IMR-90 (cell line): ENCODE measurements at regions of chr11 and their contacts with region 1.

Region 1: DNA sequence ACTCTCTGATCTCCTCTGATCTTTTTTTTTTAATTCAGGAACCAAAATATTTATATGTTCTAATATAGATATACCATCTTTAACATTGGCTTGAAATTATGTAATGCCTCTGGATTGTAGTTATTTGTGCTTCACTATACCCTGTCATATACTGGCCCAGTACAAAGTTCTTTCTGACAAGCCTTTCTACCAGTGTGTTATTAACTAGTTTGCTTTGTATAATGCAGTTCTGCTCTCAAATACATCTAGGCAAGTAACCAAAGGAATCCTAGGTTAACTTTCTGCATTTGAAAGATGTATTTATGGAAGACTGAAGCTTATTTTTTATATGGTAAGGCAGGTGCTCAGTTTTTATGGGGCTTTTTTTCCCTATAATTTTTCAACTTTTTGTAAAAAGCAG is 36.1 kb downstream of the ARHGEF12 start:
- DNase-seq: no peak
- ATAC-seq: peak; percentile 66
- H3K4me3 ChIP-seq: no peak overlapping the region
- H3K27ac ChIP-seq: no peak overlapping the region
- H3K4me1 ChIP-seq: peaks cover 2% of the 10 kb centered on the region; the same call in 1 of the 2 replicates
- H3K27me3 ChIP-seq: no peaks in the 10 kb centered on the region
- CTCF ChIP-seq: no peak
- POLR2A ChIP-seq: no peak
- RAD21 ChIP-seq: no peak

Region 2: DNA sequence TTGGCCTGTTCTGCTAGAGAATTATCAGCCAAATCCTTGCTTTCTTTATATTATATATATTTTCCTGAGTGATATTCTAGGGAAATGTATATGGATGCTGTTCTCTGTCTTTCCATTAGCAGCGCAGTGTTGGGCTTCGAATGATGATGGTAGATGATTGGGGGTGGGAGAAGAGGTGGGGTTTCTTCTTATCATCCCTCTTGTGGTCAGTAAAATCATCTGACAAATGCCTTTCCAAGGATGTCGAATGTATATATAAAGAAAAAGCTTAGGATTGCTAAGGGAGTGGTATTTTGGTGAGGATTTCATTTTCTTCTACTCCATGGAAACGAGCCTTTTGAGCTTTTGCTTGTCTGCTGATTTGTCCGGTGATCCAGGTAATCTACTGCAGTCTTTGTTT is 12.8 kb after region 1 on chr11:
- CTCF ChIA-PET with region 1: interaction called, 8 read pairs
- POLR2A ChIA-PET with region 1: no interaction called
- dilution Hi-C with region 1: no loop called
- in situ Hi-C with region 1: no loop called
- intact Hi-C with region 1: loop called (anchors 1 kb)
- DNase-seq: peak; percentile 80
- ATAC-seq: peak; percentile 70
- H3K4me3 ChIP-seq: no peak overlapping the region
- H3K27ac ChIP-seq: no peak overlapping the region; the same call in 1 of the 2 replicates
- H3K4me1 ChIP-seq: peaks cover 15% of the 10 kb centered on the region
- H3K27me3 ChIP-seq: no peaks in the 10 kb centered on the region
- CTCF ChIP-seq: no peak; the same call in 1 of the 2 replicates
- POLR2A ChIP-seq: no peak
- RAD21 ChIP-seq: no peak

Region 3: DNA sequence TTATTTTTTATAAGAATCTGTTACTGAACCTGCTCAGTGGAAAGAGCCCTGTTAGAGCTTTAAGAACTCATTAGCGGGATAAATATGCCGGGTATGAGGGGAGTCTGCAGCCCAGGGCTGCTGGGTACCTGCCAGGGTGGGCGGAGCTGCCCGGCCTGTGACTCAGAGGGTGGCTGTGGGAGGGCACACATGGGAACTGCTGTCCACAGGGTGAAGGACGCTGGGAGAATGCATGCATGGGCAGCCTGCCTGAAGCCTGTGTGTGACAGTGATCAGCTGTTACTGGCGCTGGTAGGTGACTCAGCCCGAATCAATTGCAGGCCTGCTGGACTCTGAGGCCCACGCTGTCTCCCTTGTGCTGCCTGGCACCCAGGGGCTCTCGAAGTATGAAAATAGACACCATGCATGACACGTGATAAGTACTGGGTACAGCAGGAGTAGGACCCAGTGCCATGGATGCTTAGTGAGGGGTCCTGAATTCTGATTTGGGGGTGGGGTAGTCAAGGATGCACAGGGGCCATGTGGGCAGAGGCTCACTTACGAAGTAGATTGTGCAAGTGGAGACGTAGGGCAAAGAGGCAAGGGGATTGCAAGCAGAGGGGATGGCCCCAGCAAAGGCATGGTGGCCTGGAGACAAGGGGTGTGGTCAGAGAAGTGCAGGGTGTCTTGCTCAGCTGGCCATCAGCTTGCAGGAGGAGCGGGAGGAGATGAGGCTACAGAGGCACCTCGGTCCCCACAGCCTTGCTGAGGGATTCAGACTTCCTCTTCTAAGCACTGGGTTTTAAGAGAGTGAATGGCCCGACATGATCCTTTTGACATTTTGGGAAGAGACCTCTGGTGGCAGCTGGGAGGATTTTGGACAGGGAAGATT is 175.8 kb after region 1 on chr11:
- CTCF ChIA-PET with region 1: no interaction called
- POLR2A ChIA-PET with region 1: no interaction called
- dilution Hi-C with region 1: no loop called
- in situ Hi-C with region 1: no loop called
- intact Hi-C with region 1: no loop called
- DNase-seq: peak; percentile 98
- ATAC-seq: peak; percentile 74
- H3K4me3 ChIP-seq: no peak overlapping the region
- H3K27ac ChIP-seq: peak overlapping the region; percentile 66
- H3K4me1 ChIP-seq: peaks cover 23% of the 10 kb centered on the region
- H3K27me3 ChIP-seq: no peaks in the 10 kb centered on the region
- CTCF ChIP-seq: no peak
- POLR2A ChIP-seq: no peak
- RAD21 ChIP-seq: peak; percentile 17